ENCODE measurements at regions of chr19 and their contacts with region 1.

Region 1: DNA sequence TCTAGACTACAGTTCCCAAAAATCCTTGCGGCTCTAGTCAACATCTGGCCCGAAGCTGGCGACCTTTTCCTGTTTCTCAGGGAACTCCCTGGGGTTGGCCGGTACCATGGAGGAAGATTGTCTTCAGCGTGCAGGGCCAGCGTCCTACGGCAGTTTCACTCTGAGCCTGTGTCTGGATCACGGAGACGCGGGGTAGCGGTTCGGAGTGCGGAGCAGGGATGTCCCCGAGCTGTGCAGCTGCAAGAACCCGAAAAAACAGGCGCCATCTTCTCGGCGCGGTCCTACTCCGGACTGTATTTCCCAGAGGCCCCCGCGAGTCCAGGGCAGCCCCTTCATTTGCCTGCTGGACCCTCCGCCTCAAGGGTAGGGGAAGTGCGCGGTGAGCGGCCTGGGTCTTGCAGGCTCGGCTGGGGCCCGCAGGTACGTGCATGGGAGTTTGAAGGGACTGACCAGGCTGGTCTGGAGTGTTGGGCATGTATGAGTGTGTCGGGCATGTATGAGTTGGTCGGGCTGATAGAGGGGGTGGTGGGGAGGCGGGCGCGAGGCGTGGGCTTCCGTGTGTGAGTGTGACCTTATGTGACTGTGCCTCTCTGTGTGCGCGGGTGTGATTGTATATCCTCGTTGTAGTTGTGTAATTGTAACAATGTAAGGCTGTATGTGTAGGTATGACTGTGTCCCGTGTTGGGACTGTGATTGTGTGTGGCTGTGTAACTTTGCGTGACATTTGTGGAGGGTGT is at the start of gene ZNF383:
- DNase-seq: peak; percentile 78
- H3K4me3 Mint-ChIP-seq: peak within 1 kb of the TSS; percentile 96
- H3K27ac Mint-ChIP-seq: peak within 1 kb of the TSS; percentile 90
- H3K4me1 Mint-ChIP-seq: peaks cover 20% of the 10 kb centered on the region
- H3K27me3 Mint-ChIP-seq: no peaks in the 10 kb centered on the region
- total RNA-seq, gene ZNF383: 6.3 TPM in 2 replicates

Region 2: DNA sequence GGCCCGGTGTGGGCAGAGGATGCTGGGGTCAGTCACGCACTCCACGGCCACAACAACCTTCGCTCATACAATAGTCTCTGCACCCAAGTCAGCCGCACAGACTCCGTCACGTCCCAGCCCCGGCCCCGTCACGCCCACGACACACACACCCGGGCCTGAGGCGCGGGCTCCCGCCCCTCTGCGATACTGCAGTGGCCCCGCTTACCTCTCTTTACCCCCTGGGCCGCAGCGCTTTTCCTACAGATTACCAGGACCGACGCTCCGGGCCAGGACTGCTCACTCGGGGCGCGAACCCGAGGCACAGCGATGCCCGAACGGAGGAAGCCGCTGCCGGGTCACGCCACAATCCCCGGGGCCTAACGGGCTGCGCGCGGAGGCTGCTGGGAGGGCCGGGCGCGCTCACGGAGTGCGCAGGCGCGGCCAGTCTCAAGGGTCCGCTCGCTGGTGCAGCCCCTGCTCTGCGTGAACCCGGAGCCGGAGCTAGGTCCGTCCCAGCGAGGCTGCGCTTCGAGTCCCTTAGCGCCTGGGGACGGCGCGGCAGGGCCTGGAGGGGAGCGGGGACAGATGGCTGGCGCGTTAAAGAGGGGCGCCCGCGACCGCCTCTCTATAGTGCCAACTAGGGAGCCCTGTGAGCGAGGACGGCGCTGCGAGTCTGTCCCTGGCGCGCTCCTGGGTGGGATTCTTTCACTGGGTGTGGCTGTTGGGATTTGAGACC is 799.6 kb before region 1 on chr19 and contains the start of gene ZFP82:
- intact Hi-C with region 1: loop called (anchors 5 kb)
- DNase-seq: peak; percentile 73
- H3K4me3 Mint-ChIP-seq: peak within 1 kb of the TSS; percentile 93
- H3K27ac Mint-ChIP-seq: peak within 1 kb of the TSS; percentile 94
- H3K4me1 Mint-ChIP-seq: peaks cover 18% of the 10 kb centered on the region
- H3K27me3 Mint-ChIP-seq: peaks cover 5% of the 10 kb centered on the region
- total RNA-seq, gene ZFP82: 5.1 and 5.3 TPM in 2 replicates

Region 3: DNA sequence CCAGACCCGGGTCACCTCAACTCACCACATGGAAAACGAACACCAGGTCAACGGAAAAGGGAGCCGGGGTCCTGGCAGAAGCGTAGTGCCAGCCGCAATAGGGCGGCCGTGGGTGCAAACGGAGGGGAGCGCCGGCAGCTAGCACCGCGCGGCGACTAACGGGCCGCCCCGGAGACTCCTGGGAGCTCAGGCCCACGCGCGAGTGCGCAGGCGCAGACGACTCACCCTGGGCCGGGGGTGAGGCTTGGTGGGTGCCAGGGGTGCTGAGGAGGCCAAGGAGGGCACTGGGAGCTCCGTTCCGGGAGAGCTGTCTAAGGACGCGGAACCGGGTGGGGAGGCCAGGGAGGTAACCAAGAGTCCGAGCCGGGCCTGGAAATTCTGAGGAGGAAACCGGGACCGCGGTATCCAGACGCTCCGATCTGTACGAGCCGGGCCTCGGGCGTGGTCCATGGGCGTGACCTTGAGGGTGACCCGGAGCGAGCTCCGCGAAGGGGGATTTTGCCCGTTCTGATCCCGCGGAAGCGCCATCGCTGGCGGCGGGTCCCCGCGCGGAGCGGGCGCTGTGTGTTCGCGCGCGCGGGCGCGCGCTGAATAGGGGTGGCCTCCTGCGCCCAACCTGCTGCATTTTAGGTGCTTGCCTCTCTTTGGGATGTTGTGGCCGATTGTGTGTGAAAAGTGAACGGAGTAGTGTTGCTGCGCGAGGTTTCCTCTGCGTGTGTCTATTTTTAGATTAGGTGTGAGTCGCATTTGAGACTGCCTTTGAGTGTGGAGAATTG is 612.7 kb before region 1 on chr19 and contains the start of gene ZNF382:
- intact Hi-C with region 1: loop called (anchors 10 kb)
- DNase-seq: peak; percentile 85
- H3K4me3 Mint-ChIP-seq: peak within 1 kb of the TSS; percentile 90
- H3K27ac Mint-ChIP-seq: peak within 1 kb of the TSS; percentile 95
- H3K4me1 Mint-ChIP-seq: peaks cover 26% of the 10 kb centered on the region
- H3K27me3 Mint-ChIP-seq: no peaks in the 10 kb centered on the region
- total RNA-seq, gene ZNF382: 10.2 and 10.8 TPM in 2 replicates

Region 4: GRCh38 chr19:36837906-36838783 is 379.9 kb before region 1 on chr19 and contains the start of gene ZNF790:
- intact Hi-C with region 1: loop called (anchors 5 kb)
- DNase-seq: peak; percentile 81
- H3K4me3 Mint-ChIP-seq: no peak within 1 kb of the TSS
- H3K27ac Mint-ChIP-seq: no peak within 1 kb of the TSS
- H3K4me1 Mint-ChIP-seq: no peaks in the 10 kb centered on the region
- H3K27me3 Mint-ChIP-seq: no peaks in the 10 kb centered on the region
- total RNA-seq, gene ZNF790: 4.4 and 4.5 TPM in 2 replicates

Region 5: DNA sequence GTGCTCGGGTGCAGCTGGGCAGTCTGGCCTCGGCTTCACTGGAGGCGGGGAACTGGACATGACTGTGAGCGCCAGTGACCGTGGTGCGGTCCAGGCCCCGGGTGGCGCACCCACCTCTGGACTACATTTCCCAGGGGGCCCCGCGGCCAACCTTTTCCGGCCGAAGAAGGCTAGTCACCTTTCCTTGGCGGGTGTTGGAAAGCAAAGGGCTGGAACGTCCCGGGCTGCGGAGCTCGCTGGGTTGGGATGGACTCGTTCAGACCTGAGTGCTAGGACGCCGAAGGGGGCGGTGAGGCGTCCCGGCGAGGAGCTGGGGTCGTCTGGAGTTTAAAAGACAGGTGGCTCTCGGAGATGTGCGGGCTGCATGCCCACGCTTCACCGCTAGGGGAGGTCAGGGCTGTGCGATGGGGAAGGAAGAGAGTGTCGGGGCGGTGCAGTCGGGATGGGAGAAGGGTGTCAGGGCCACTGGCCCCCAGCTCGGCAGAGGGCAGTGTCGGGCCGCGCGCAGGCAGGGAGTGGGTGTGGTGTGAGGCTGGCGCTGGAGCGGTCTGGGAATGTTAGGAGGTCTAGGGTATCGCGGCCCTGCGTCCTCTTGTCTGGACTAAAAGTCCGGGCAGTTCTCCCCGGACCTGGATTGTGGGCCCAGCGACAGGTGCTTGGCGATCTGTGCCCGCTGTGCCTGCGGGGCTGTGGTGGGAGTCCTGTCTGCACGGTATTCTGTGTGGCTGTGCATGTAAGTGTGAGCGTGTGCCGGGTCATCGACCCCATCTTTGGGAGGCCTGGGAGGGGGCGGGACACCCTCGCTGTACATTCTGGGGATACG is 244.8 kb before region 1 on chr19:
- intact Hi-C with region 1: loop called (anchors 1 kb)
- DNase-seq: peak; percentile 67
- H3K4me3 Mint-ChIP-seq: peak overlapping the region; percentile 98
- H3K27ac Mint-ChIP-seq: peak overlapping the region; percentile 87
- H3K4me1 Mint-ChIP-seq: peaks cover 12% of the 10 kb centered on the region
- H3K27me3 Mint-ChIP-seq: no peaks in the 10 kb centered on the region

Region 6: GRCh38 chr19:37127999-37128820 is 89.8 kb before region 1 on chr19:
- intact Hi-C with region 1: no loop called
- DNase-seq: no peak
- H3K4me3 Mint-ChIP-seq: no peak overlapping the region
- H3K27ac Mint-ChIP-seq: no peak overlapping the region
- H3K4me1 Mint-ChIP-seq: no peaks in the 10 kb centered on the region
- H3K27me3 Mint-ChIP-seq: no peaks in the 10 kb centered on the region

Region 7: GRCh38 chr19:37172368-37173366 is 45.4 kb before region 1 on chr19 and contains the start of gene ZNF585A:
- intact Hi-C with region 1: loop called (anchors 1 kb)
- DNase-seq: peak; percentile 74
- H3K4me3 Mint-ChIP-seq: no peak within 1 kb of the TSS
- H3K27ac Mint-ChIP-seq: no peak within 1 kb of the TSS
- H3K4me1 Mint-ChIP-seq: no peaks in the 10 kb centered on the region
- H3K27me3 Mint-ChIP-seq: no peaks in the 10 kb centered on the region
- total RNA-seq, gene ZNF585A: 1.2 and 2.6 TPM in 2 replicates

Region 8: GRCh38 chr19:37537391-37537947 is 319.4 kb after region 1 on chr19:
- intact Hi-C with region 1: no loop called
- DNase-seq: no peak
- H3K4me3 Mint-ChIP-seq: no peak overlapping the region
- H3K27ac Mint-ChIP-seq: no peak overlapping the region
- H3K4me1 Mint-ChIP-seq: no peaks in the 10 kb centered on the region
- H3K27me3 Mint-ChIP-seq: no peaks in the 10 kb centered on the region

Region 9: GRCh38 chr19:37655689-37656371 is 437.8 kb after region 1 on chr19:
- intact Hi-C with region 1: loop called (anchors 5 kb)
- DNase-seq: peak; percentile 83
- H3K4me3 Mint-ChIP-seq: peak overlapping the region; percentile 90
- H3K27ac Mint-ChIP-seq: peak overlapping the region; percentile 93
- H3K4me1 Mint-ChIP-seq: peaks cover 28% of the 10 kb centered on the region
- H3K27me3 Mint-ChIP-seq: no peaks in the 10 kb centered on the region

Region 10: DNA sequence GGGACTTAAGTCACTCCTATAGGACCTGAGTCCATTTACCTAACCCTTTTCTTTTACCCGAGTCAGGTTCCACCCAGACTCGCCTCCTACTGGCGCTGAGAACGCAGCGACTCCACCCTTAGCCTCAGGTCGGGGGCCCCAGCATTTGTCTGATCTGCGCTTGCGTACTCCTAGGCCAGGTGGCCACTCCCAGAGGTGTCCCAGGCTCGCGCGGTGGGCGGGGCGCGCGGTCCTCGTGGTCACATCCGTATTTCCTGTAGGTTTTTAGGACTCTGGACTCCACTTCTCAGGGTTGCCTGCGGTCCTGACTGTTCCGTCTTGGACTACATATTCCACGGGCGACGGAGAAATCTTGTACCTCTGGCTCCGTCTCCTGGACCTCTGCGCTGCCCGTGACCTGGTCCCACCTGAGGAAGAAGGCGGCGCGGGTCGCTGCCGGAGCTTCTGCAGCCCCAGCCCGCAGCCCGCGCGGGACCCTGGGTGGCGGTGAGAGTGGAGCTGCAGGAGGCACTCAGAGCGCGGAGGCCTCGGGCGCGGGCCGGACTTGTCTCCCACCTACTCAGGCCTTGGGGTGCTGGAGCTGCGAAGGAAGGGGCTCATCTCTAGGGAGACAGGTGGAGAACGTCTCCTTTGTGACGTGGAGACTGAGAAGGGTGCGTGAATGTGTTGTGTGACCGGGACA is 572.4 kb after region 1 on chr19:
- intact Hi-C with region 1: no loop called
- DNase-seq: no peak
- H3K4me3 Mint-ChIP-seq: no peak overlapping the region
- H3K27ac Mint-ChIP-seq: no peak overlapping the region
- H3K4me1 Mint-ChIP-seq: no peaks in the 10 kb centered on the region
- H3K27me3 Mint-ChIP-seq: no peaks in the 10 kb centered on the region